ENCODE measurements at regions of chr3 and their contacts with region 1.

Region 1: DNA sequence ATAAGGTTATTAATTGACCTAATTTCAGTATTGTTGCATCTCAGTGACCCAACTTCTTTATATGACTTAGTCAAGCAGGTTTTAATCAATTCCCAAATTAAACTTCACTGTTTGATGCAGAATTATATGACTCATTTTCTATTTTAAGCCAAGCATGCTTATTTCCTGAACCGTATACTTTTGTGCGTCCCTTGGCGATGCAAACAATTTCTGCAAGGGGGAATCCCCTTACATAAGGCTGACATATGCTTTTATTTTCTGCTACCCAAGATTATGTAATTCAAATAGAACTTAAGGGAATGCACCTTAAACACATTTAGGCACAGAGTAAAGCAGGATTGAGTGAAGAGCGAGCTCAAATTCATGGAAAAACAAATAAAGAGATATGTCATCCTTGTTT is 303.9 kb downstream of the PDCD6IP start:
- DNase-seq: no peak
- H3K4me3 ChIP-seq: no peak overlapping the region
- H3K27ac ChIP-seq: no peak overlapping the region
- H3K4me1 ChIP-seq: no peaks in the 10 kb centered on the region
- H3K27me3 ChIP-seq: no peaks in the 10 kb centered on the region
- CTCF ChIP-seq: no peak
- POLR2A ChIP-seq: no peak

Region 2: GRCh38 chr3:35670408-35670965 is 1568.2 kb after region 1 on chr3:
- intact Hi-C with region 1: loop called (anchors 5 kb)
- DNase-seq: no peak
- H3K4me3 ChIP-seq: no peak overlapping the region
- H3K27ac ChIP-seq: no peak overlapping the region
- H3K4me1 ChIP-seq: no peaks in the 10 kb centered on the region
- H3K27me3 ChIP-seq: no peaks in the 10 kb centered on the region
- CTCF ChIP-seq: no peak
- POLR2A ChIP-seq: no peak